WTC11 (cell line): ENCODE measurements at regions of chr15 and their contacts with region 1.

Region 1: GRCh38 chr15:70182857-70183695 is 85.4 kb upstream of the TLE3 start:
- DNase-seq: peak; percentile 38
- ATAC-seq: peak; percentile 90
- H3K4me3 Mint-ChIP-seq: no peak overlapping the region
- H3K27ac Mint-ChIP-seq: no peak overlapping the region
- H3K4me1 Mint-ChIP-seq: peaks cover 17% of the 10 kb centered on the region
- H3K27me3 Mint-ChIP-seq: no peaks in the 10 kb centered on the region; the same call in 1 of the 2 replicates
- CTCF ChIP-seq: no peak

Region 2: GRCh38 chr15:70196314-70197291 is 13.5 kb after region 1 on chr15:
- CTCF ChIA-PET with region 1: interaction called, 11 read pairs
- POLR2A ChIA-PET with region 1: no interaction called
- DNase-seq: peak; percentile 81
- ATAC-seq: peak; percentile 86
- H3K4me3 Mint-ChIP-seq: peak overlapping the region; percentile 13
- H3K27ac Mint-ChIP-seq: peak overlapping the region; percentile 92
- H3K4me1 Mint-ChIP-seq: peaks cover 46% of the 10 kb centered on the region
- H3K27me3 Mint-ChIP-seq: peaks cover 3% of the 10 kb centered on the region; the same call in 1 of the 2 replicates
- CTCF ChIP-seq: no peak